Uterus (tissue), 4 donors: ENCODE measurements at regions of chr14 and their contacts with region 1.

Region 1: GRCh38 chr14:65824285-65824977 is 411.9 kb downstream of the FUT8 start:
- DNase-seq: peak; percentile 35 to 43
- H3K4me3 ChIP-seq: no peak overlapping the region
- H3K27ac ChIP-seq: no peak overlapping the region
- H3K4me1 ChIP-seq: no peaks in the 10 kb centered on the region
- H3K27me3 ChIP-seq: no peaks in the 10 kb centered on the region
- CTCF ChIP-seq: peak; percentile 78 to 87 (median 83)
- POLR2A ChIP-seq: no peak

Region 2: DNA sequence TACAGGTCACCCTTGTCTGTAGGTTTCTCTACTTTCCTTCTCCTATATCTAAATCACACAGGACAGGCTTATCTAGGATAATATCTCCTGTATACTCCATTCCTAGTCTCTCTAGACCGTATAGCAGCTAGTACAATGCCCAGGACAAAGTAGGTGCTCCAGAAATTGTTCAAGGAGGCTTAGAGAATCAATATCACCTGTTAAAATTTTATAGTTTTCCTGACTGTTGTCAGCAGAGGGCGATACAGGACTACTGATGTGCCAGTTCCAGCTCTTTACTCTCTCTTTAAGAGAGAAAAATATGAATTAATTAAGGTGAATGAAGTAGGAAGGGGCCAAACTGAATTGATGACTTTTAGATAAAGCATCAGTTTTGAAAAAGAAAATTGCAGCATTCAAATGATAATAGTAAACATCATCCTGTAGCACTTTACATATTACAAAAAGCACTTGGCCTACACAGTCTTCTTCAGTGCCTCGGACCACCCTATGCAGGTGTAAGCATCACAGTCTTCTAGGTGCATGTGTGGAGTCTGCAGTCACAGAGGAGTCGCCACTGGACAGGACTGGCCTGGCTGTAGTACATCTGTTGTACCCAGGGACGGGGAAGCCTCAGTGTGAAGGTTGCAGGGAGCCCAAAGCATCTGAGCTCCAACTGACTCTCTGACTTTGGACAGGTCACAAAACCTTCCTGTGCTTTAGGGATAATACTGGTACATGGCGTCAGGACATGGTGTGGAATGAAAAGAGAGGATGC is 660.2 kb before region 1 on chr14:
- intact Hi-C with region 1: loop called (anchors 10 kb)
- DNase-seq: no peak
- H3K4me3 ChIP-seq: no peak overlapping the region
- H3K27ac ChIP-seq: no peak overlapping the region
- H3K4me1 ChIP-seq: no peaks in the 10 kb centered on the region
- H3K27me3 ChIP-seq: no peaks in the 10 kb centered on the region
- CTCF ChIP-seq: peak; percentile 55 to 72 (median 62)
- POLR2A ChIP-seq: no peak

Region 3: DNA sequence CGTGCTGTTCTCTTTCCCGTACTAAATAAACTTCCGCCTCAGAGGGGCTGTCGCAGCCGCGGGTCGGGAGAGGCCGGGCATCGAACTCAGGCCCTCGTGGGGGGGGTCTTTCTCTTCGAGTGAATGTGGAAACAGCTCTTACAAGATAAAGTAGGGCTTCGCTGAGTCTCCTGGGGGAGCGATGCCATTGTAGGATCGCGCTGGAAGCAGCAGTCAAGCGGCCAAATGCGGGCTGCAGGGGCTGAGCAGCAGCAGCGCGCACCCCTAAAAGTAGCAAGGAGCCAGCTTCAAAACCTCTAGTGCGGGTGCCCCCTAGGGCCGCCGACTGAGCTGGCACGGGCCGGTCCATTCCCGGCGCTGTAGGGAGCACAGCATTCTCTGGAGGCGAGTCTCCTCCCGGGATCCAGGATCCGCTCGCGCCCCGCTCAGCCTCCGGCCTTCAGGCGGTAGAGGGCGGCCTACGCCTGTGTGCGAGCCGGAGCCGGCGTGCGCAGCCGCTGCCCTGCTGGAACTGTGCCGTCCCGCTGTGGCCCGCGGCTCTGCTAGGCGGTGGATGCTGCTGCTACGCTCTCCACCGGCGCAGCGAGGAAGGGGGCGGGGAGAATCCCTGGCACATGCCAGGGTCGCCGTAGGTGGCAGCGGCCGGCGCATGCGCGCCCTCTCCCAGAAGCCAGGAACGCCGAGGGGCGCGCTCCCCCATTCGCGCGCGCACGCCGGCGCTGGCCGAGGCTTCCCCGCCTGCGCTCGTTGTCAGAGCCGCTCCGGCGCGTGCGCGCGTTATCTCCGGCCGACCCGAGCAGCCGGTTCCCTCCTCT is 412.2 kb before region 1 on chr14 and contains the start of gene FUT8:
- intact Hi-C with region 1: loop called (anchors 10 kb)
- DNase-seq: peak; percentile 92 to 95
- H3K4me3 ChIP-seq: peak within 1 kb of the TSS; percentile 75 to 93
- H3K27ac ChIP-seq: peak within 1 kb of the TSS; percentile 90 to 98
- H3K4me1 ChIP-seq: no peaks in the 10 kb centered on the region
- H3K27me3 ChIP-seq: no peaks in the 10 kb centered on the region
- CTCF ChIP-seq: peak; percentile 65 to 73 (median 66)
- POLR2A ChIP-seq: peak; percentile 75 to 78
- total RNA-seq, gene FUT8: 39.2 to 57.6 (median 51.8) TPM